ENCODE measurements at regions of chr5 and their contacts with region 1.

Region 1: GRCh38 chr5:158174918-158175851 is 316.2 kb upstream of the CLINT1 start:
- DNase-seq: peak; percentile 53
- ATAC-seq: peak; percentile 78 to 87
- H3K4me3 ChIP-seq: no peak overlapping the region
- H3K27ac ChIP-seq: no peak overlapping the region
- H3K4me1 ChIP-seq: peaks cover 15% of the 10 kb centered on the region
- H3K27me3 ChIP-seq: no peaks in the 10 kb centered on the region
- CTCF ChIP-seq: peak; percentile 83

Region 2: GRCh38 chr5:158320178-158320674 is 145.0 kb after region 1 on chr5:
- intact Hi-C with region 1: no loop called
- DNase-seq: no peak
- ATAC-seq: no peak
- H3K4me3 ChIP-seq: no peak overlapping the region
- H3K27ac ChIP-seq: no peak overlapping the region
- H3K4me1 ChIP-seq: no peaks in the 10 kb centered on the region
- H3K27me3 ChIP-seq: no peaks in the 10 kb centered on the region
- CTCF ChIP-seq: no peak

Region 3: DNA sequence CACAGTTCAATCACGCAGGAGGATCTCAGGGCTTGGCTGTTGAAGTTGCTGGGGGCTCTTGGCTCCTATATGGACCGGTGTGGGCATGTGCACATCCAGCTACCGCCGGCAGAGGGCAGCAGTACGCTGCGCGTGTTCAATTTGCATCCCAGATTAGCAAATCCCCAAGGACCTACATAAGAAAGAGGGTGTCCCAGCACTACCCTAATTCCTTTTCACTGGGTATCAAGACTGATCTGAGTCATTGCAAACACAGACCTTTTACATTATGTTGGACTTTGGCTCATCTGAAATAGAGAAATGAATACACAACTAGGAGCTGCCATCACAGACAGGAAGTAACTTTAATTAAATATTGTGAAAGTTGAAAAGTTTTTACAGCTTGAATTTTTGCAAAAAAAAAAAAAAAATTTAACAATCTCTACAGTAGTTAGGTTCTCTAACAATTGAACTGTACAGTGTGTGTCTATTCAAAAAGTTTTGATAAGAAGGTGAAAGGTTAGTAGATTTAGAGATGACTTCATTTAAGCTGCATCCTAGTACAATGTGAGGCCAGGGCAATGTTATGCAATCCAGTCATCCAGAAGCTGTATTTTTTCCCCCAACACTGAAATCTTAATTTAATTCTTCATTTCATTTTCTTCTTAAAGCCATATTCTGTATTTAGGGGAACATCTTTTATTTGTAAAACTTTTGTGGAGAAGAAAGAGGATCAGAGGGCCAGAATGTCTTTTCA is 520.6 kb after region 1 on chr5:
- intact Hi-C with region 1: loop called (anchors 10 kb)
- DNase-seq: peak; percentile 77
- ATAC-seq: peak; percentile 86 to 89
- H3K4me3 ChIP-seq: no peak overlapping the region
- H3K27ac ChIP-seq: no peak overlapping the region
- H3K4me1 ChIP-seq: peaks cover 3% of the 10 kb centered on the region
- H3K27me3 ChIP-seq: no peaks in the 10 kb centered on the region
- CTCF ChIP-seq: peak; percentile 97

Region 4: DNA sequence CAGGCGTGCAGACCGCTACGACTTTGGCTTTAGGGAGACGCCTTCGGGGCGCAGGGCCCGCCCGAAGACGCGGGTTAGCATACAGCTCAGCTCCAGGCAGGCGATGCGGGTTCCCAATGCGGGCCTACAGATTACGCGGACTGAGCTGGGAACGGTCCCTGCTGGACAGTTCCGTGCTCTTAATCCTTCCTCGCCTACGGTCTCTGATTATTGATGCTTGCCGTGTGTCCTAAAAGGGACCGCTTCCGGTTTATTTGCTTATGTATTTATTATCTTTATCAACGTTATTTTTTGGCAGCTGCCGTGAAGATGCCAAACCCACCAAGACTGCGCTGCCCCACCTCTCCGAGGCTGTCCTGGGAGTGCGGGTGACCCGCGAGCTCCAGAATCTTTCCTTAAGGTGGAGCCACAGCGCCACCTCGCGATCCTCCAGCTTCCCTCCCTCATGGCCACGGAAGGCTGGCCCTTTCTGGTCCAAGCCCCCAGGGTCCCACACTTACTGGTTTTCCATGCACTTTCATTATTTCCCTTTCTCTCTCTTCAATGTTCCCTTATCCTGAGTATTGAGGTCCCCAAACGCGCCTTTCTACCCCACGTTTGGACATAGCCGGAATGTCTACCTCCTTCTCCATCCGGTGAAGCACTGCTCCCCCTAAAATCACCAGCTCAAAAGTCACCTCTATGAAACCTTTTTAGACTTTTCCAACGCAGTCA is 931.5 kb after region 1 on chr5:
- intact Hi-C with region 1: loop called (anchors 10 kb)
- DNase-seq: peak; percentile 80
- ATAC-seq: peak; percentile 85 to 92
- H3K4me3 ChIP-seq: peak overlapping the region; percentile 39
- H3K27ac ChIP-seq: no peak overlapping the region
- H3K4me1 ChIP-seq: peaks cover 28% of the 10 kb centered on the region
- H3K27me3 ChIP-seq: peaks cover 66% of the 10 kb centered on the region
- CTCF ChIP-seq: peak; percentile 95